OCI-LY7 (cell line): ENCODE measurements at regions of chr1 and their contacts with region 1.

Region 1: GRCh38 chr1:205711104-205712020 is 31.1 kb upstream of the SLC45A3 start:
- DNase-seq: peak; percentile 87
- H3K4me3 ChIP-seq: no peak overlapping the region
- H3K27ac ChIP-seq: peak overlapping the region; percentile 10
- H3K4me1 ChIP-seq: peaks cover 10% of the 10 kb centered on the region
- CTCF ChIP-seq: peak; percentile 99

Region 2: GRCh38 chr1:205528887-205529825 is 182.2 kb before region 1 on chr1:
- CTCF ChIA-PET with region 1: no interaction called
- POLR2A ChIA-PET with region 1: no interaction called
- intact Hi-C with region 1: loop called (anchors 5 kb)
- DNase-seq: peak; percentile 82
- H3K4me3 ChIP-seq: peak overlapping the region; percentile 50
- H3K27ac ChIP-seq: no peak overlapping the region
- H3K4me1 ChIP-seq: no peaks in the 10 kb centered on the region
- CTCF ChIP-seq: peak; percentile 87